ENCODE measurements at regions of chr12 and their contacts with region 1.

Region 1: DNA sequence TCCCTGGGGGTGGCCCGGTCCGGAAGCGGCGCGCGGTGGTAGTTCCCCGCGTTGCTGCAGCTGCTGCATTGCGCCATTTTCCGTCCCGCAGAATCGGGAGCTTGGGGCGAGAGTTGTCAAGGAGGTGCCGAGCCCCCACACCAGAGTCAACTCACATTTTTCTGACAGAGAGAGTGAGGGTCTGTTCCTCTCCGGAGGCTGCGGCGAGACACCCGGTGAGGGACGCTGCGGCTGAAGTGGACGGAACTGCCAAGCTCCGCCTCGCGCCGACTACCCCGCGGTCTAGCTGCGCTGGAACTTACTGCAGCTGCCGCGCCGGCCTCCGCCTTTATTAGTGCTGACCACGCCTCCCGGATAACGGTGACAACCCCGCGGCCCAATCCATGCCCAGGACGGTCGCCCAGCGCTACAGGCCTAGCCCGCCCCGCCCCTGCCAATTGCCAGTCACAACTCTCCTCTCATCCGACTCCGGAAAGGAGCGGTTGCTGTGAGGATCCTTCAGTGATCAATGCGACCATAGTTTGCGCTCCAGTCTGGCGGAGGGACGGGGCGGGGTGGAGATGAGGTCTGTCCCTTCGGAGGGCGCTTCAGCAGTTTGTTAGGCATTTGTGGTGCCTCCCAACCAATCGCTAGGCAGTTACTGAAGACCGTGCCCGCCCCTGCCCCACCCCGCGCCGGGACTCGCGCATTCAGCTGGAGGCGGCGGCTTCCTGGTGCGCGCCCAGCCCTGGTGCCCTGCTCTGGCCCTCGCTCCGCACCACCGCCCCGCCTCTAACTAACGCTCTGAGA is at the start of gene VAMP1:
- DNase-seq: peak; percentile 97
- H3K4me3 ChIP-seq: peak within 1 kb of the TSS; percentile 64 to 83 (median 65)
- H3K27ac ChIP-seq: peak within 1 kb of the TSS; percentile 55
- H3K4me1 ChIP-seq: peaks cover 12% of the 10 kb centered on the region
- H3K27me3 ChIP-seq: no peaks in the 10 kb centered on the region
- CTCF ChIP-seq: no peak
- total RNA-seq, gene VAMP1: 2.1 to 5.0 TPM

Region 2: DNA sequence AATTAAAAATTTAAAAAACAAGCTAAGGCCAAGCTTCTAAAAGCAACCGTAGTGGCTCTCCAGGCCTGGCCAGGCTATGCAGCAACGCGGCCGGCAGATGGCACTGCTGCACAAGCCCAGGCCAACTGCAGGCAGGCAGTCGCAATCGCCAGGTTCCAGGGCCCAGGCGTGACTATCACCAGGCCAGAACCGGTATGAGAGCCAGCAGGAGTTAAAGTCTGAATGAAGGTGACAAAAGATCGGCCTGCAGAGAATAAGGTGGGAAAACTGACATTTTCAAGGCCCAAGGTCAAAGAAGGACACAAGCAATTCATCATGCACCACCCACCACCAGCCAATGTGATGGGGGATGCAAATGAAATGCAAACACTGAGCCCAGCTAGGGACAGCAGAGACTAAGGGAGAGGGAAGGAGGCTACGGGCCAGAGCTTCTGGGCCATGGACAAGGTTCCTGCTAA is 481.9 kb before region 1 on chr12:
- CTCF ChIA-PET with region 1: no interaction called
- dilution Hi-C with region 1: no loop called
- in situ Hi-C with region 1: no loop called
- intact Hi-C with region 1: loop called (anchors 5 kb)
- DNase-seq: peak; percentile 54
- H3K4me3 ChIP-seq: no peak overlapping the region
- H3K27ac ChIP-seq: no peak overlapping the region
- H3K4me1 ChIP-seq: no peaks in the 10 kb centered on the region
- H3K27me3 ChIP-seq: no peaks in the 10 kb centered on the region
- CTCF ChIP-seq: peak; percentile 97

Region 3: GRCh38 chr12:6205144-6205539 is 265.4 kb before region 1 on chr12:
- CTCF ChIA-PET with region 1: no interaction called
- dilution Hi-C with region 1: no loop called
- in situ Hi-C with region 1: no loop called
- intact Hi-C with region 1: no loop called
- DNase-seq: no peak
- H3K4me3 ChIP-seq: no peak overlapping the region
- H3K27ac ChIP-seq: peak overlapping the region; percentile 18
- H3K4me1 ChIP-seq: peaks cover 48% of the 10 kb centered on the region
- H3K27me3 ChIP-seq: no peaks in the 10 kb centered on the region
- CTCF ChIP-seq: no peak

Region 4: GRCh38 chr12:6278439-6279255 is 191.9 kb before region 1 on chr12:
- CTCF ChIA-PET with region 1: interaction called, 3 read pairs
- dilution Hi-C with region 1: no loop called
- in situ Hi-C with region 1: no loop called
- intact Hi-C with region 1: loop called (anchors 2 kb)
- DNase-seq: peak; percentile 93
- H3K4me3 ChIP-seq: peak overlapping the region; percentile 5 to 42 (median 38)
- H3K27ac ChIP-seq: peak overlapping the region; percentile 99
- H3K4me1 ChIP-seq: peaks cover 58% of the 10 kb centered on the region
- H3K27me3 ChIP-seq: no peaks in the 10 kb centered on the region
- CTCF ChIP-seq: peak; percentile 50 to 68

Region 5: DNA sequence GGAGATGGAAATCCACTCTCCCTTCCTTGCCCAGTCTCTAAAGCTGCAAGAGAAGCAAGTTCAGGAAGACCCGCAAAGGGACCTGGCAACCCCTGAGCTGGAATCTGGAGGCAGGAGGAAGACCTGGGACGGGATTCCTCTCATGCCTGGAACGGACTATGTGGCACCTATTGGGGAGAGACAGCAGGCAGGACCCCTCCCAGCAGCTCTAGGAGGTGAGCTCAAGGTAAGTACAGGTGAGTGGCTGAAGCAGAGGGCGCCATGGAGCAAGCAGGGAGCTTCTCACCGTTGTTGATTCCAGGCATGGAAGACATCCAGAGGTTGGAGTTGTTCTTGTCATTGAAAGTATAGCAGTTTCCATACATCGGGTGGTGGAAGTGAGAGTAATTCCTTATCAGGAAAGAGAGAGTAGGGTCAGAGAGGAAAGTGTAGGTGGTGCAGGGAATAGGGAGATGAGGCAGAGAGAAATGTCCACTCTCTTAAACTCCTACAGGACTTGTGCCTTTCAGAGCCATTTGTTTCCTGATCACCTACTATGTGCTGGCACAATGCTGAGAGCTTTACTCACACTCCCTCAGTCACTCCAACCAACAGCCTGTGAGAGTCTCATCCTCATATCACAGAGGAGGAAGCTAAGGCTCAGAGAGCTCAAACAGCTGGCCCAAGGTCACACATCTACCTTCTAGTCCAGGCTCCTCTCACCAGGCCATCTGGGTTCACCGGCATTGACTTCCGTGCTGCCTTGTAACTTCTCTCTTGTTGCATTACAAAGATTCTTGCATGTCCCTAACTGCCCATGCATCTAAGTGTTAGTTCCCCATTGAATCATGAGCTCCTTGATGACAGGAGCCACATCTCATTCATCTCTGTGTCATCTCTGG is 114.8 kb before region 1 on chr12:
- CTCF ChIA-PET with region 1: no interaction called
- dilution Hi-C with region 1: no loop called
- in situ Hi-C with region 1: no loop called
- intact Hi-C with region 1: no loop called
- DNase-seq: no peak
- H3K4me3 ChIP-seq: no peak overlapping the region
- H3K27ac ChIP-seq: no peak overlapping the region
- H3K4me1 ChIP-seq: no peaks in the 10 kb centered on the region
- H3K27me3 ChIP-seq: no peaks in the 10 kb centered on the region
- CTCF ChIP-seq: peak in 1 of 2 donors; percentile 35

Region 6: DNA sequence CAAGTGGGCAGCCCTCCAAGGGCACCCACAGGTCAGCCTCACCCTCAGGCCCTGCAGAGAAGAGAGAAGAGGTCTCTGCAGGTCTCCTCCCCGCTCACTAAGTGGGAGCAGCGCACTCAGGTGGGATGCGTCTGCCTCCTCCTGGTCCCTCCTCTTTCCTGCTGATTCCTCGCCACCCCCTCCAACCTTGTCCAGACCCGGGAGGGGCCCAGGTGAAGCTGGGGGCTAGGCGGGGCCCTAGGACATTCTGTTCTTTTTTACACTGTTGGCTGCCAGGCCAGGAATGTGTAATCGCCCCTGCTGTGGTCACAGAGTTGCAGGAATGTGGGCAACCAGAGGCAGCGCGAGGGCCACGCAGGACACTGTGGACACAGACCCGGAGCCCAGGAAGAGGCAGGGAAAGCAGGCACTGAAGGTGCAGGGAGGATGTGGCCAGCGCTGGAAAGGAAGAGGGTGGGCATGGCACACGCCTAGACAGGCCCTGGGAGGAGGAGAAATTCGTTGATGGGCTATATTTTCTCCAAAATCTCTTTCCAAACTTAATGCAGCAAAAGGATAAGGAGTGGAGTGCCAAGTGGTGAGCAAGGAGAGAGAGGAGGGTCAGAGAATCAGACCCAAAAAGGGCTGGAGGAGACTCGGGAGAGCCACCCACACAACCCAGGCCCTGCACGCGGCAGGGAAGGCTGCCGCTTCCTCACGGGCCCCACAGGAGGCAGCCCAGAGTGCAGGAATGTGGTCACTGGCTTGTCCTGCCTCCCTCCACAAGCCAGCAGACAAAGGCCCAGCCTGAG is 94.3 kb before region 1 on chr12:
- CTCF ChIA-PET with region 1: interaction called, 4 read pairs
- dilution Hi-C with region 1: no loop called
- in situ Hi-C with region 1: no loop called
- intact Hi-C with region 1: loop called (anchors 5 kb)
- DNase-seq: peak; percentile 90
- H3K4me3 ChIP-seq: peak overlapping the region; percentile 64 to 90 (median 87)
- H3K27ac ChIP-seq: peak overlapping the region; percentile 92
- H3K4me1 ChIP-seq: peaks cover 41% of the 10 kb centered on the region
- H3K27me3 ChIP-seq: no peaks in the 10 kb centered on the region
- CTCF ChIP-seq: peak; percentile 29 to 64

Region 7: GRCh38 chr12:6493497-6494257 is 23.1 kb after region 1 on chr12 and contains the start of gene NCAPD2:
- CTCF ChIA-PET with region 1: no interaction called
- dilution Hi-C with region 1: no loop called
- in situ Hi-C with region 1: no loop called
- intact Hi-C with region 1: loop called (anchors 1 kb)
- DNase-seq: peak; percentile 97
- H3K4me3 ChIP-seq: peak within 1 kb of the TSS; percentile 90 to 95 (median 94)
- H3K27ac ChIP-seq: peak within 1 kb of the TSS; percentile 93
- H3K4me1 ChIP-seq: peaks cover 27% of the 10 kb centered on the region
- H3K27me3 ChIP-seq: no peaks in the 10 kb centered on the region
- CTCF ChIP-seq: peak; percentile 7 to 12
- total RNA-seq, gene NCAPD2: 17.8 to 53.7 TPM

Region 8: GRCh38 chr12:6554168-6555017 is 83.8 kb after region 1 on chr12:
- CTCF ChIA-PET with region 1: no interaction called
- dilution Hi-C with region 1: no loop called
- in situ Hi-C with region 1: no loop called
- intact Hi-C with region 1: loop called (anchors 1 kb)
- DNase-seq: no peak
- H3K4me3 ChIP-seq: peak overlapping the region in 1 of 3 experiments; percentile 49
- H3K27ac ChIP-seq: no peak overlapping the region
- H3K4me1 ChIP-seq: peaks cover 36% of the 10 kb centered on the region
- H3K27me3 ChIP-seq: no peaks in the 10 kb centered on the region
- CTCF ChIP-seq: peak; percentile 54